B cell (primary cell): ENCODE measurements at regions of chr18 and their contacts with region 1.

Region 1: GRCh38 chr18:76977108-76977621 is 154.8 kb downstream of the ZNF236 start:
- DNase-seq: no peak
- ATAC-seq: no peak
- H3K4me3 ChIP-seq: no peak overlapping the region
- H3K4me3 Mint-ChIP-seq: peak overlapping the region; percentile 20
- H3K27ac ChIP-seq: peak overlapping the region in 1 of 2 donors; percentile 18
- H3K27ac Mint-ChIP-seq: peak overlapping the region; percentile 82
- H3K4me1 ChIP-seq: peaks cover 52 to 53% of the 10 kb centered on the region in 2 donors
- H3K4me1 Mint-ChIP-seq: peaks cover 62% of the 10 kb centered on the region
- H3K27me3 ChIP-seq: no peaks in the 10 kb centered on the region
- H3K27me3 Mint-ChIP-seq: no peaks in the 10 kb centered on the region
- CTCF ChIP-seq: no peak

Region 2: DNA sequence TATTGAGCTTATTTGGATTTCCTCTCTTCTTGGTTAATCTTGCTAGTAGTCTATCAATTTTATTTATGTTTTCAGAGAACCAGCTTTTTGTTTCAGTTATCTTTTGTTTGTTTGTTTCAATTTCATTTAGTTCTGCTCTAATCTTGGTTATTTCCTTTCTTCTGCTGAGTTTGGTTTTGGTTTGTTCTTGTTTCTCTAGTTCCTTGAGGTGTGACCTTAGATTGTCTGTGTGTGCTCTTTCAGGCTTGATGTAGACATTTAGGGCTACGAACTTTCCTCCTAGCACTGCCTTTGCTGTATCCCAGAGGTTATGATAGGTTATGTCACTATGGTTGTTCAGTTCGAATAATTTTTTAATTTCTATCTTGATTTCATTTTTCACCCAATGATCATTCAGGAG is 13.2 kb before region 1 on chr18:
- CTCF ChIA-PET with region 1: interaction called, 287 read pairs
- POLR2A ChIA-PET with region 1: interaction called, 24 read pairs
- intact Hi-C with region 1: loop called (anchors 1 kb)
- DNase-seq: peak; percentile 65
- ATAC-seq: no peak
- H3K4me3 ChIP-seq: peak overlapping the region in 2 of 5 experiments; percentile 18 to 44
- H3K4me3 Mint-ChIP-seq: peak overlapping the region; percentile 71
- H3K27ac ChIP-seq: peak overlapping the region; percentile 26 to 93
- H3K27ac Mint-ChIP-seq: peak overlapping the region; percentile 94
- H3K4me1 ChIP-seq: peaks cover 63 to 67% of the 10 kb centered on the region in 2 donors
- H3K4me1 Mint-ChIP-seq: peaks cover 35% of the 10 kb centered on the region
- H3K27me3 ChIP-seq: no peaks in the 10 kb centered on the region
- H3K27me3 Mint-ChIP-seq: no peaks in the 10 kb centered on the region
- CTCF ChIP-seq: no peak